SK-N-SH (cell line): ENCODE measurements at regions of chr17 and their contacts with region 1.

Region 1: GRCh38 chr17:17812211-17813057 is 24.4 kb downstream of the SREBF1 start:
- DNase-seq: peak; percentile 95
- H3K4me3 ChIP-seq: peak overlapping the region in 1 of 2 experiments; percentile 30; a peak in 1 of 4 replicates
- H3K27ac ChIP-seq: peak overlapping the region in 1 of 2 experiments; percentile 62; a peak in 2 of 4 replicates
- H3K4me1 ChIP-seq: peaks cover 0 to 56% of the 10 kb centered on the region in 2 experiments; a peak in 3 of 4 replicates
- H3K27me3 ChIP-seq: no peaks in the 10 kb centered on the region
- CTCF ChIP-seq: peak; percentile 98
- EP300 ChIP-seq: no peak
- RAD21 ChIP-seq: peak; percentile 80

Region 2: DNA sequence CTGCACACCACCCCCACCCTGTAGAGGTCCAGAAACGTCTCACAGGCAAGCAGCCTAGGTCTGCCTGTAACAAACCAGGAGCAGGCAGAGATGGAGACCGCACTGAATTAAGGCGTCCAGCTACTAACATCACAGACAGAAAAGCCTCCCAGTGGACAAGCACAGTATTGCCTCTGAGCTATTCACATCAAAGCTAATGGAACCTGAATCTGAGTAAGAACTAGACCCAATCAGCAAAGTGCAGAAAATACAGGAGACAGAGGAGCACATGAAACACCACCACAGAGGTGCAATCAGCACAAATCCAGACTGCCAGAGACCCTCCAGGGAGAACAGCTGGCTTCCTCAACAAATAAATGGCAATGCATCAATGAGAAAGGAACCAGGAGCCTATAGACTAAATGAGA is 198.7 kb before region 1 on chr17:
- CTCF ChIA-PET with region 1: no interaction called
- POLR2A ChIA-PET with region 1: no interaction called
- DNase-seq: peak; percentile 70
- H3K4me3 ChIP-seq: no peak overlapping the region
- H3K27ac ChIP-seq: no peak overlapping the region
- H3K4me1 ChIP-seq: no peaks in the 10 kb centered on the region
- H3K27me3 ChIP-seq: no peaks in the 10 kb centered on the region
- CTCF ChIP-seq: peak; percentile 68
- EP300 ChIP-seq: no peak
- RAD21 ChIP-seq: peak; percentile 71

Region 3: DNA sequence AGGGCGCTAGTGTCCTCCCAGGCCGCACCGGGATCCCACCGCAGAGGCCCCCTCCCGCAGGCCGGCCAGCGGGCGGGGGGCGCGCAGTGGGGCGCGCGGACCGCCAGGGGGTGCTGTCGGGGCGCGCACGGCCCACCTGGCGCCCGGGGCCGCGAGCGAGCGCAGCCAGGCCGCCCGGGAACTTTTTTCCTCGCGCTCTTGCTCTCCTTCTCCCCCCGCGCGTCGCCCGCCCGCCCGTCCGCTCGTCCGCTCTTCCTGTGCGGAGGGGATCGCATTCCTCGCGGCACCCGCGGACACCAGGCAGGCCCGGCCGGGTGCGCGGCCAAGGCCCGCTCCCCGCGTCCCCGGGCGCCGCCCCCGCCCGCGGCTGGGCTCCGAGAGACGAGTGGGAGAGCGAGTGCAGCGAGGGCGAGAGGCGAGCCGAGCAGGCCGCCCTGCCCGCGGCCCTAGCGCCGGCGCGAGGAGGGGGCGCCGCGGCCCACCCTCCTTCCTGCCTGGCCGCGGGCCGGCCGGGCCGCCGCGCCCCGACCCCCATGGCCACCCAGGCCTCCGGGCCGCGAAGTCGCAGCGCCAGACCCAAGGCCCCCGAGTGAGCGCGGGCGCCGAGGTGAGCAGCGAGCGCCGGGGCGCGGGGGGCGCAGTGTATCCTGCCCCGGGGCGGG is 131.1 kb before region 1 on chr17 and contains the start of gene RAI1:
- CTCF ChIA-PET with region 1: interaction called, 17 read pairs
- POLR2A ChIA-PET with region 1: interaction called, 3 read pairs
- DNase-seq: peak; percentile 95
- H3K4me3 ChIP-seq: peak within 1 kb of the TSS; percentile 81 to 85
- H3K27ac ChIP-seq: peak within 1 kb of the TSS; percentile 94 to 96
- H3K4me1 ChIP-seq: peaks cover 23 to 29% of the 10 kb centered on the region in 2 experiments
- H3K27me3 ChIP-seq: no peaks in the 10 kb centered on the region
- CTCF ChIP-seq: peak; percentile 59
- EP300 ChIP-seq: no peak
- RAD21 ChIP-seq: peak; percentile 75
- polyA plus RNA-seq, gene RAI1: 2.6 and 4.7 TPM in 2 replicates

Region 4: DNA sequence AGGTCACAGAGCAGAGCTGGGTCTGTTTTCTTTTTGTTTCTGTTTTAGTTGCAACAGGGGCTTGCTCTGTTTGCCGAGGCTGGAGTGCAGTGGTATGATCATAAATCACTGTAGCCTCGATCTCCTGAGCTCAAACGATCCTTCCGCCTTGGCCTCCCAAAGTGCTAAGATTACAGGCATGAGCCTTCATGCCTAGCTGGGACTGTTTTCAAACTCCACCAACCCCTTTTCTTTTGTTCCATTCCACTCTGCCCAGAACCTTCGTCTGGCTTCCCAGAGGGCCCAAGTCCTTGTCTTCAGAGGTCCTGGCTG is 108.9 kb before region 1 on chr17:
- CTCF ChIA-PET with region 1: no interaction called
- POLR2A ChIA-PET with region 1: no interaction called
- DNase-seq: no peak
- H3K4me3 ChIP-seq: no peak overlapping the region
- H3K27ac ChIP-seq: no peak overlapping the region; a peak in 1 of 4 replicates
- H3K4me1 ChIP-seq: peaks cover 15 to 34% of the 10 kb centered on the region in 2 experiments; a peak in 3 of 4 replicates
- H3K27me3 ChIP-seq: no peaks in the 10 kb centered on the region
- CTCF ChIP-seq: no peak
- EP300 ChIP-seq: no peak
- RAD21 ChIP-seq: no peak

Region 5: GRCh38 chr17:17792551-17793377 is 19.7 kb before region 1 on chr17:
- CTCF ChIA-PET with region 1: interaction called, 25 read pairs
- POLR2A ChIA-PET with region 1: interaction called, 4 read pairs
- DNase-seq: peak; percentile 84
- H3K4me3 ChIP-seq: no peak overlapping the region
- H3K27ac ChIP-seq: peak overlapping the region in 1 of 2 experiments; percentile 96; a peak in 2 of 4 replicates
- H3K4me1 ChIP-seq: peaks cover 33 to 78% of the 10 kb centered on the region in 2 experiments; a peak in 3 of 4 replicates
- H3K27me3 ChIP-seq: no peaks in the 10 kb centered on the region
- CTCF ChIP-seq: no peak
- EP300 ChIP-seq: no peak
- RAD21 ChIP-seq: peak; percentile 3; the same call in 1 of the 2 replicates

Region 6: DNA sequence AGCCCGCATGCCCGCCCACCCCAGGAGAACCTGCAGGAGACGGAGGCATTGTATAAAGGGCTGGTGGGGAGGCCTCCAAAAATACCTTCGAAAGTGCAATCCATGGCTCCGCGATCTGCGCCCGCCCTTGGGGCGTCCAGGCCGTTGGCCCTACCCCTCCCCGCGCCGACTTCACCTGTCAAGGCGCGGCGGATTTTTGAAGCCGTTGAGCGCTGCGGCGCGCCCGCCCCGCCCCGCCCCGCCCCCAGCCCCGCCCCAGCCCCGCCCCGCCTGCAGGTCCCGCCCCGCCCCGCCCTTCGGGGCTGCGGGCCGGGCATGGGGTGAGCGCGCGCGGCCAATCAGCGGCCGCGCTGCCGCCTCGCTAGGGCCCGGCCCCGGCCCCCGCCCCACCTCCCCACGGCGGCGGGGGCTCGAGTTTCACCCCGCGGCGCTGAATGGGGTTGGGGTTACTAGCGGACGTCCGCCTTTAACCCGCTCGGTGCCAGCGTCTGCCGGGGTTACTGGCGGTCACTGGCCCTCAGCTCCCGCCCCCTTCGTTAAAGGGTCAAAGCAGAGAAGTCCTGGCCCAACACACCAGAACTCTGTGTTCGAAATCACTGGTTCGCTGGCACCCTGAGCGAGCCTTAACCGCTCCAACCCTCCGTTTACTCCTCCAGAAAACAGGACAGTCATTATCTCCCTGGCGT is 11.1 kb after region 1 on chr17:
- CTCF ChIA-PET with region 1: interaction called, 32 read pairs
- POLR2A ChIA-PET with region 1: interaction called, 5 read pairs
- DNase-seq: peak; percentile 99
- H3K4me3 ChIP-seq: peak overlapping the region; percentile 49 to 57
- H3K27ac ChIP-seq: peak overlapping the region; percentile 40 to 97
- H3K4me1 ChIP-seq: peaks cover 40 to 94% of the 10 kb centered on the region in 2 experiments
- H3K27me3 ChIP-seq: no peaks in the 10 kb centered on the region
- CTCF ChIP-seq: no peak
- EP300 ChIP-seq: 0 out of 4 replicates have a peak, but pooled peaks of 1 of the 2 experiments have one; percentile 18
- RAD21 ChIP-seq: no peak

Region 7: DNA sequence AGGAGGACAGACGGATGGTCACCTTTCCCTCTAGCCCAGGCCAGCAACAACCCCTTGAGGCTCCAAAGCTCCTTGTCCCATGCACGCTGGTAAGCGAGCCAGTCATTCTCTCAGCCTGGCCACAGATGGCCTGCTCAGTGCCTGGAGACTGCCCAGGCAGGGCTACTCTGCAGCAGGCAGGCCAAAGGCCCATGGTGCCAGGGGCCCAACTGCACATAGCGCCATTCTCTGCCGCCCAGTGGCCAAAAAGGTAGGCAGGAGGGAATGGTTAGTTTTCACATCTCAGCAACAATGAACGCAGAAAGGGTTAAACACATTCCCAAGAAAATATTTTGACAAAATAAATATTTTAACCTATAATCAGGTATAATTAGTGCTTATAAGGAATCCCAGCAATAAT is 32.1 kb after region 1 on chr17:
- CTCF ChIA-PET with region 1: interaction called, 16 read pairs
- POLR2A ChIA-PET with region 1: interaction called, 4 read pairs
- DNase-seq: peak; percentile 32
- H3K4me3 ChIP-seq: no peak overlapping the region
- H3K27ac ChIP-seq: peak overlapping the region in 1 of 2 experiments; percentile 76; a peak in 2 of 4 replicates
- H3K4me1 ChIP-seq: peaks cover 9 to 94% of the 10 kb centered on the region in 2 experiments; a peak in 3 of 4 replicates
- H3K27me3 ChIP-seq: no peaks in the 10 kb centered on the region
- CTCF ChIP-seq: no peak
- EP300 ChIP-seq: no peak
- RAD21 ChIP-seq: no peak

Region 8: GRCh38 chr17:17877529-17878358 is 65.3 kb after region 1 on chr17:
- CTCF ChIA-PET with region 1: interaction called, 16 read pairs
- POLR2A ChIA-PET with region 1: interaction called, 4 read pairs
- DNase-seq: peak; percentile 74
- H3K4me3 ChIP-seq: 0 out of 4 replicates have a peak overlapping the region, but pooled peaks of 1 of the 2 experiments have one; percentile 9
- H3K27ac ChIP-seq: peak overlapping the region; percentile 84 to 99
- H3K4me1 ChIP-seq: peaks cover 15 to 55% of the 10 kb centered on the region in 2 experiments
- H3K27me3 ChIP-seq: no peaks in the 10 kb centered on the region
- CTCF ChIP-seq: 0 out of 2 replicates have a peak, but pooled peaks have one; percentile 21
- EP300 ChIP-seq: no peak; a peak in 1 of 4 replicates
- RAD21 ChIP-seq: peak; percentile 20